ENCODE measurements at regions of chr12 and their contacts with region 1.

Region 1: GRCh38 chr12:122545855-122546254 is 18.8 kb downstream of the KNTC1 start:
- DNase-seq: no peak
- ATAC-seq: peak; percentile 80
- H3K4me3 Mint-ChIP-seq: peak overlapping the region; percentile 57
- H3K27ac Mint-ChIP-seq: peak overlapping the region; percentile 83
- H3K4me1 Mint-ChIP-seq: peaks cover 28% of the 10 kb centered on the region
- H3K27me3 Mint-ChIP-seq: no peaks in the 10 kb centered on the region
- CTCF ChIP-seq: no peak

Region 2: DNA sequence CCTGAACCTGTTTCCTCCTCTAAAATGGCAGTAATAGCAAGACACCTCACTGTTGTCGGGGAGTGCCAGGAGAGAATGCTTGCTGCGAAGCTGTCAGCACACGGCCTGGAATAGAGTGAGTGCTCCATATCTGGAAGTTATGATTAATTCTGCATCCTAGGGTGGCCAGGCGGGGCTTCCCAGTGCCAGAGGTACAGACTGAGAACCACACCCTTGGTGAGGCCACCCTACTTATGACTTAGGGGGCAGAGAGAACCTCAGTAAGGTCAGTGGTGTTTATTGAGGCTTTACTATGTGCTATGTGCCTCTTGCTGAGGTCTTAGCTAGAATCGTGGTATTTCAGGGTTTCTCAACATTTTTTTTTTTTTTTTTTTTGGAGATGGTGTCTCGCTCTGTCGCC is 896.5 kb before region 1 on chr12:
- CTCF ChIA-PET with region 1: no interaction called
- POLR2A ChIA-PET with region 1: interaction called, 11 read pairs
- intact Hi-C with region 1: no loop called
- DNase-seq: no peak
- ATAC-seq: no peak
- H3K4me3 Mint-ChIP-seq: no peak overlapping the region
- H3K27ac Mint-ChIP-seq: no peak overlapping the region
- H3K4me1 Mint-ChIP-seq: no peaks in the 10 kb centered on the region
- H3K27me3 Mint-ChIP-seq: no peaks in the 10 kb centered on the region
- CTCF ChIP-seq: no peak

Region 3: DNA sequence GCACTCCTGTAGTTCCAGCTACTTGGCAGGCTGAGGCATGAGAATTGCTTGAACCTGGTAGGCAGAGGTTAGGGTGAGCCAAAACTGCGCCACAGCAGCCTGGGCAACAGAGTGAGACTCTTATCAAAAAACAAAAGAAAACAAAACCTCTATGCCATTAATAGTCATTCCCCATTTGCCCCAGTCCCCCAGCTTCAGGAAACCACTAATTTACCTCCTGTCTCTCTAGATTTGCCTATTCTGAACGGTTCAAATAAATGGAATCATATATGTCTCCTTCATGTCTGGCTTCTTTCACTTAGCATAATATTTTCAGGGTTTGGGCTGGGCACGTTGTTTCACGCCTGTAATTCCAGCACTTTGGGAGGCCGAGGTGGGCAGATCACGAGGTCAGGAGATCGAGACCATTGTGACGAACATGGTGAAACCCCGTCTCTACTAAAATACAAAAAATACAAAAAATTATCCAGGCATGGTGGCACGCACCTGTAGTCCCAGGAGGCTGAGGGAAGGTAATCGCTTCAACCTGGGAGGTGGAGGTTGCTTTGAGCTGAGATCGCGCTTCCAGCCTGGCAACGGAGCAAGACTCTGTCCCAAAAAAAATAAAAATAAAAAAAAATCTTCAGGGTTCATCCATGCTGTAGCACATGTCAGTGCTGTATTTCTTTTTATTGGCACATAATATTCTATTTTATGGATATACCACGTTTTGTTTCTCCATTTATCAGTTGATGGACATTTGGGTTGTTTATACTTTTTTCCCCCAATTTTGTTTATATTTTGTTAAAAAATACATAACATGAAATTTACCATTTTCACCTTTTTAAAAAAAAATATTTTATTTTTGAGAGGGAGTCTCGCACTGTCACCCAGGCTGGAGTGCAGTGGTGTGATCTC is 13.1 kb after region 1 on chr12:
- CTCF ChIA-PET with region 1: no interaction called
- POLR2A ChIA-PET with region 1: interaction called, 3 read pairs
- intact Hi-C with region 1: loop called (anchors 2 kb)
- DNase-seq: no peak
- ATAC-seq: peak; percentile 70
- H3K4me3 Mint-ChIP-seq: peak overlapping the region; percentile 61
- H3K27ac Mint-ChIP-seq: peak overlapping the region; percentile 84
- H3K4me1 Mint-ChIP-seq: peaks cover 19% of the 10 kb centered on the region
- H3K27me3 Mint-ChIP-seq: no peaks in the 10 kb centered on the region
- CTCF ChIP-seq: no peak

Measured in activated B cell treated with CpG ODN at 0.5 μM for 24 hours (primary cell).